ENCODE measurements at regions of chr11 and their contacts with region 1.

Region 1: GRCh38 chr11:727859-728748 is 19.2 kb upstream of the TALDO1 start:
- DNase-seq: peak; percentile 75 to 85 (median 76)
- H3K4me3 ChIP-seq: no peak overlapping the region
- H3K4me3 Mint-ChIP-seq: peak overlapping the region in 1 of 7 donors; percentile 32
- H3K27ac ChIP-seq: peak overlapping the region; percentile 2
- H3K27ac Mint-ChIP-seq: no peak overlapping the region
- H3K4me1 ChIP-seq: peaks cover 18% of the 10 kb centered on the region
- H3K4me1 Mint-ChIP-seq: peaks cover 4 to 15% (median 5%) of the 10 kb centered on the region in 3 donors
- H3K27me3 ChIP-seq: no peaks in the 10 kb centered on the region
- H3K27me3 Mint-ChIP-seq: peaks cover 1 to 3% of the 10 kb centered on the region in 2 donors

Region 2: DNA sequence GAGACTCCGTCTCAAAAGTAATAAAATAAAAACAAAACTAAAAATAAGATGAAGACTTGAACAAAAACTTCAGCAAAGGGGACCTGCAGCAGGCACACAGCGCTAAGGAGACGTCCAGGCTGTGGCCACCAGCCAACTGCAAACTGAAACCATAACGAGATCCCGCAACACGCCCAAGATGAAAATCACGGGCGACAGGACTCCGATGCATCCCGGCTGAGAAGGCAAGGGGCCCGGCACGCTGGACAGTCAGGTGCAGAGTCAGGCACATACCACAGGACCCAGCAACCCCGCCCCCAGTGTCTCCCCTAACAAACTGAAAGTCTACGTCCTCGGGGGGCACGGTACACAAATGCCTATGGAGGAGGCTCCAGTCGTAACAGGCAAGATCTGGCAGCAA is 201.9 kb before region 1 on chr11:
- CTCF ChIA-PET with region 1: no interaction called
- POLR2A ChIA-PET with region 1: no interaction called
- DNase-seq: no peak
- H3K4me3 ChIP-seq: no peak overlapping the region
- H3K4me3 Mint-ChIP-seq: no peak overlapping the region
- H3K27ac ChIP-seq: no peak overlapping the region
- H3K27ac Mint-ChIP-seq: no peak overlapping the region
- H3K4me1 ChIP-seq: no peaks in the 10 kb centered on the region
- H3K4me1 Mint-ChIP-seq: no peaks in the 10 kb centered on the region
- H3K27me3 ChIP-seq: no peaks in the 10 kb centered on the region
- H3K27me3 Mint-ChIP-seq: peaks cover 0 to 3% of the 10 kb centered on the region in 2 donors

Region 3: DNA sequence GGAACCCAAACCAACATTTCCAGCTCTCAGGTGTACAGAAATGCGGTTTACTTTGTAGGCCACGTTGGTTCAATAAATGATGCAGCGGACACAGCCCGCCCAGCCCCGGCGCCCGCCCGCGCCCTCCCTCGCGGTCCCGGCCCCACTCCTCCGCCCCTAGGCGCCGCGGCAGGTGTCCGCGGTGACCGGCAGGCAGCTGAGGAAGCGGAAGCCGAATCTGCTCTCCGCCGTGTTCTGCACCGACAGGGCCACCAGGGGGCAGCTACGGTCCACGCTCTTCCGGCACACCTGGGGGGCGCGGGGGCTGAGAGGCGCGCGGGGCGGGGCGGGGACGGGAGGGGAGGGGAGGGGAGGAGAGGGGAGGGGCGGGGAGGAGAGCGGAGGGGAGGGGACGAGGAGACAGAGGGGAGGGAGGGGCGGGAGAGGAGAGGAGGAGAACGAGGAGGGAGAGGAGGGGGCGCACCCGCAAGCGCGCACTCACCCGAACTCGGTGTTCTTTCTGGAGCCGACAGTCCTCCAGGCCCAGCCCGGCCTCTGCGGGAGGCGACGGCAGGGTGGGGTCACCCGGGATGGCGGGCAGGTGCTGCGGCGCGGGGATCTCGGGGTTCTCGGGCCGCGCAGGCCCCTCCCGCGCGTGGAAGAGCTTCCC is 173.2 kb before region 1 on chr11:
- CTCF ChIA-PET with region 1: interaction called, 49 read pairs
- POLR2A ChIA-PET with region 1: interaction called, 13 read pairs
- DNase-seq: peak; percentile 69 to 86 (median 70)
- H3K4me3 ChIP-seq: peak overlapping the region; percentile 45
- H3K4me3 Mint-ChIP-seq: peak overlapping the region in 6 of 7 donors; percentile 28 to 68 (median 58)
- H3K27ac ChIP-seq: no peak overlapping the region
- H3K27ac Mint-ChIP-seq: no peak overlapping the region
- H3K4me1 ChIP-seq: peaks cover 14% of the 10 kb centered on the region
- H3K4me1 Mint-ChIP-seq: peaks cover 3 to 14% (median 3%) of the 10 kb centered on the region in 3 donors
- H3K27me3 ChIP-seq: no peaks in the 10 kb centered on the region
- H3K27me3 Mint-ChIP-seq: no peaks in the 10 kb centered on the region

Region 4: GRCh38 chr11:695538-696248 is 32.4 kb before region 1 on chr11 and contains the start of gene TMEM80:
- CTCF ChIA-PET with region 1: interaction called, 69 read pairs
- POLR2A ChIA-PET with region 1: interaction called, 10 read pairs
- DNase-seq: peak; percentile 96 to 99 (median 98)
- H3K4me3 ChIP-seq: peak within 1 kb of the TSS; percentile 81
- H3K4me3 Mint-ChIP-seq: peak within 1 kb of the TSS; percentile 85 to 94 (median 88)
- H3K27ac ChIP-seq: peak within 1 kb of the TSS; percentile 92
- H3K27ac Mint-ChIP-seq: peak within 1 kb of the TSS; percentile 90 to 98 (median 94)
- H3K4me1 ChIP-seq: peaks cover 43% of the 10 kb centered on the region
- H3K4me1 Mint-ChIP-seq: peaks cover 29 to 50% (median 39%) of the 10 kb centered on the region in 3 donors
- H3K27me3 ChIP-seq: no peaks in the 10 kb centered on the region
- H3K27me3 Mint-ChIP-seq: no peaks in the 10 kb centered on the region
- total RNA-seq, gene TMEM80: 10.3 to 13.4 TPM

Region 5: GRCh38 chr11:706957-707816 is 20.9 kb before region 1 on chr11:
- CTCF ChIA-PET with region 1: interaction called, 69 read pairs
- POLR2A ChIA-PET with region 1: interaction called, 4 read pairs
- DNase-seq: no peak
- H3K4me3 ChIP-seq: no peak overlapping the region
- H3K4me3 Mint-ChIP-seq: peak overlapping the region in 3 of 7 donors; percentile 20 to 25 (median 20)
- H3K27ac ChIP-seq: no peak overlapping the region
- H3K27ac Mint-ChIP-seq: no peak overlapping the region
- H3K4me1 ChIP-seq: no peaks in the 10 kb centered on the region
- H3K4me1 Mint-ChIP-seq: peaks cover 2 to 15% (median 4%) of the 10 kb centered on the region in 3 donors
- H3K27me3 ChIP-seq: peaks cover 14% of the 10 kb centered on the region
- H3K27me3 Mint-ChIP-seq: peaks cover 10 to 26% of the 10 kb centered on the region in 2 donors

Region 6: DNA sequence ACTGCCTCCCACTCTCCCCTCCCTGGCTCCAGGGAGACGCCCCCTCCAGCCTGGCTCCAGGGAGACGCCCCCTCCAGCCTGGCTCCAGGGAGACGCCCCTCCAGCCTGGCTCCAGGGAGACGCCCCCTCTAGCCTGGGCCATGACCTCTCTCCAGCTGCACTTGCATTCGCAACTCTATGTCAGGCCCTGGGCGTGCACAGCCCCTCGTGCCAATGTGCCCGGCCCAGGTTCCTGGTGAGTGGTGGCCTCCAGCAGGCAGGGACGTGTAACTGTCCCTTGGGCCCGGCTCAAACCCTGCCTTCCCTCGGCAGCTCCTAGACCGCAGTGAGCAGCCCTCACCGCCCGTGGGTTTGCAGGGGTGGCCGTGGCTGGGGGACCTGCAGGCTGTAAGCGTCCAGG is 301.6 kb after region 1 on chr11:
- CTCF ChIA-PET with region 1: no interaction called
- POLR2A ChIA-PET with region 1: no interaction called
- DNase-seq: no peak
- H3K4me3 ChIP-seq: no peak overlapping the region
- H3K4me3 Mint-ChIP-seq: no peak overlapping the region
- H3K27ac ChIP-seq: no peak overlapping the region
- H3K27ac Mint-ChIP-seq: no peak overlapping the region
- H3K4me1 ChIP-seq: no peaks in the 10 kb centered on the region
- H3K4me1 Mint-ChIP-seq: no peaks in the 10 kb centered on the region
- H3K27me3 ChIP-seq: no peaks in the 10 kb centered on the region
- H3K27me3 Mint-ChIP-seq: no peaks in the 10 kb centered on the region